ENCODE measurements at regions of chr15 and their contacts with region 1.

Region 1: DNA sequence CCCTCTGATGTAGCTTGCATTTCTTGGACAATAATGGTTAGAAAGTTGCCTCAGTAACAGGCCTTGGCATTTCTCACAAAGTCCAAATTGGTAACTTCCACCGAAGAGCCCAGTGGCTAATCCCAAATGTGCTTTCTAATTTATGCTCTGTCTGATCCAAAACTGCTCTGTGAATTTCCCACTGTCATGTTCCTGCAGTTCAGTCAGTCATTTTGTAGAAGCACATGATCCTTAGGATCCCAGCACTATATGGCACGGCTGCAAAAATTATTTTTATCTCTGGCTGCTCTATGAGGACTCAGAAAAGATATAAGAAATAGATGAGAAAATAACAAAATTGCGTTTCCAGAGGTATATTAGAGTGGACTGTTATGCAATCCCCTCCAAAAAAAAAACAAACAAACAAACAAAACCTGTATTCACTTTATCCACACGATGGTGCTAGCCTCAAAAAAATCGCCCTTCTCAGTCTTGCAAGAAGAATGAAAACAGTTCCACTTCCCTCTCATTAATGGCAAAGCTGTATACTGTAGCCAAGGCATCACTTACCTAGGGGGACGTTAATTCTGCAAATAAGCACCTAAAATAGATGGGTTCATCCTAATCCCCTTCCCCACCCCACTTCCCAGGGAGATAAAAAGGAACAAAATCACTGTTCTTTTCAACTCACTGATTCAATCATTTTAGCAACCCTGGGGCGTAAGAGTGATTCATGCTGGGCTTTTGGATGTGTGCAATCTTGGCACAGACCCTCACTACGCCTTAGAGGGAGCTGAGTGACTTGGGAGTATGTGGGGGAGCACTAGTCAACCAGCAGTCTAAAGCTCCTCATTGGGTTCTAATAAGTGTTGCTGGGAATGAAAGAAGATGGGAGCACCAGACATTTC is 61.3 kb downstream of the TMCO5A start:
- DNase-seq: peak; percentile 27
- H3K4me3 ChIP-seq: no peak overlapping the region; the same call in 1 of the 2 replicates
- H3K27ac ChIP-seq: no peak overlapping the region
- H3K27me3 ChIP-seq: no peaks in the 10 kb centered on the region
- CTCF ChIP-seq: peak; percentile 72

Region 2: DNA sequence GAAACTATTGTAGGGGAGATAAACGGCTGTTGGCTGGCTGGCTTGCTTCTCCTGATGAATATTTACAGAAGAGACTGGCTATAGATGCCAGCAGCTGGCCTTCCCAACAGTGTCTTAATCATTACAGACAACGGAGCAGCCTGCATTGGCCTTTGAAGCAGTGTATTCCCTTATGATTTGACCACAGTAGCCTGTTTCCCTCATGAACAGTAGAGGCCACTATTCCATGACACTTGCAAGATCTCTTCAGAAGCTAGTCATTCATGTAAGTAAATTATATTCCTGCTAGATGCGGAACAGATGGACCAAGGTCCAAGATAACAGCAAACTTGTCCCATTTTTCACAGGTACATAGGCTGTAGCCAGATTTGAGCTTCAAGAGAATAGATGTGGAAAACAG is 13.9 kb before region 1 on chr15:
- CTCF ChIA-PET with region 1: interaction called, 13 read pairs
- POLR2A ChIA-PET with region 1: no interaction called
- DNase-seq: no peak
- H3K4me3 ChIP-seq: no peak overlapping the region
- H3K27ac ChIP-seq: no peak overlapping the region
- H3K27me3 ChIP-seq: peaks cover 2% of the 10 kb centered on the region
- CTCF ChIP-seq: peak; percentile 68

Region 3: DNA sequence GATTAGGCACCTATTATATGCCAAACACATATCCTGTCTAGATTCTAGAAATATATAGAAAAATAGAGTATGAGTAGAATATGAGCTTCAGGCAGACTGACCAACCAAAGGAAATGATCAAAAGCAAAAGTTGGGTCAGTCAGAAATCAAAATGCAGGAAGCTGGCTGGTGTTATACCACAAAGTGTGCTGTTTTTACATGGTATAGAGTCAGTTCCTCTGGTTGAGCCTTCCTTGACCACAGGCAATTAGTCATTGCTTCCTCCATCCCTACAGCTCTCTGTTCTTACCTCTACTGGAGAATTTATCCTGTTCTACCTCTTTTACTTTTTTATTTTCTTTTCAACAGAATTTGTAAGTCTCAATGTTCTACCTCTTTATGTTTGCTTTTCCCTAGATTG is 88.6 kb after region 1 on chr15:
- CTCF ChIA-PET with region 1: no interaction called
- POLR2A ChIA-PET with region 1: no interaction called
- DNase-seq: no peak
- H3K4me3 ChIP-seq: no peak overlapping the region
- H3K27ac ChIP-seq: no peak overlapping the region
- H3K27me3 ChIP-seq: no peaks in the 10 kb centered on the region
- CTCF ChIP-seq: no peak

Region 4: GRCh38 chr15:38111070-38111469 is 115.4 kb after region 1 on chr15:
- CTCF ChIA-PET with region 1: no interaction called
- POLR2A ChIA-PET with region 1: no interaction called
- DNase-seq: no peak
- H3K4me3 ChIP-seq: no peak overlapping the region
- H3K27ac ChIP-seq: no peak overlapping the region
- H3K27me3 ChIP-seq: no peaks in the 10 kb centered on the region
- CTCF ChIP-seq: no peak

Region 5: DNA sequence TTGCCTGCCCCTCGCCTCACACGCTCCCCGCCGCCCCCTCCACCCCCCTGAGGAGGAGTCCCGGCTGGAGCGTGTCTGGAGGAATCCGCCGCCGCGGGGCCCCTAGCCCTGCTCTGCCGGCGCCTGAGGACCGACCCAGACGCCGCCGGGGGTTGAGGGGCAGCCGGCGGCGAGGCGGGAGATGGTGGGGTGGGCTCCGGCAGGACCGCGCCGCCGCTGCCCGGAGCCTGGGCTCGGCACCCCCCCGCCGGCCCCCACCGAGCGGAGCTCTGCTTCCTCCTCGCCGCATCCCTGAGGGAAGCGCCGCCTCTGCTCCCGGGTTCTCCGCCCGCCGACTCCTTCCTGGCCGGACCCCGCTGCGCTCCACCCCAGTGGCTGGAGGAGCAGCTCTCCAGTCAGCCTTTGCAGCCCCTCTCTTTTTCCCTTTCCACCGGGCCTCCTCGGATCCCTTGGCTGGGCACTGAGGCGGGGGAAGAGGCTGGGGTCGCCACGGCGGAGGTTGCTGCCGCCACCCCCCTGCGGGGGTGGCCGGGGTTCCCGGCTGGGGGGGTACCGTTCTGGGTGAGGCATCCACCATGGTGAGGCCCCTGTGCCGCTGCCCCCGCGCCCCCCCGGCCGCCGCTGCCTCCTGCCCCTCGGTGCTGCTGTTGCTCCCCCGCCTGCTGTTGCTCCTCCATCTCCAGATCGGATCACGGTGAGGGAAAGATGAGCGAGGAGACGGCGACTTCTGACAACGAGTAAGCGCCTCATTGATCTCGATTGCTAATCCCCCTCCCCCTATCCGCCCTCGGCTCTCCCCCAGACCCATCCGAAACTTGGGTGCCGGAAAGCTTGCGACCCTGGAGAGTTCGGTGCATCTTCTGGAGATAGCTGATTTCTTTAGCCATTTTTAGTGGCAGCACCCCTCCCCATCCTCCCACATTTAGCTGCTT is 257.0 kb after region 1 on chr15 and contains the start of gene SPRED1:
- CTCF ChIA-PET with region 1: interaction called, 20 read pairs
- POLR2A ChIA-PET with region 1: no interaction called
- DNase-seq: no peak
- H3K4me3 ChIP-seq: peak within 1 kb of the TSS; percentile 93
- H3K27ac ChIP-seq: peak within 1 kb of the TSS; percentile 94
- H3K27me3 ChIP-seq: no peaks in the 10 kb centered on the region
- CTCF ChIP-seq: no peak
- polyA plus RNA-seq, gene SPRED1: 10.7 and 15.1 TPM in 2 replicates

Region 6: DNA sequence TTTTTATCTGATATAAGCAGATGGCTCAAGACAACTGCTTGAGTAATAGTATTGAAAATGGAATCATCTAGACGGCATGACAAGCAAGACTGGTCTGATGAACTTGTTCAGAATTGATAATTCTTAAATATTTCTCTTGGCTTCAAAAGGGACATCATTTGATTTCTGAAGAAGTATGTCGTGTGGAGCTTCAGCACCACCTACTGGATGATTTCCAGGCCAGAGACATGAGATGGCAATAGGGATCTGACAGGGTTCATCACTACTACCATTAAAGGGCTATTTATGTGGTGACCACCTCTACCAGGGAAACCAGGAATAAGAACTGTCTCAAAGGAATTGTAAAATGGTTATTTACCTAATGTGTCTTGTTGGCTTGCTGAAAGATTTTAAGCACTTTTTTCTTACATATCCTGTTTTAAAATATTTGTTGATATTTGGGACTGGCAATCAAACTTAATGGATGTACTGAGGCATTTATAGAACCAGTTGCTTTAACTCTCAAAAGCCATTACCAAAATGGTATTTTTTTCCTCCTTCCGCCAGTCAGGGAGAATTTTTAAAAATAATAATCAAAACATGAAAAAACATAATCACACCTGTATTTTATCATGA is 358.7 kb after region 1 on chr15:
- CTCF ChIA-PET with region 1: interaction called, 29 read pairs
- POLR2A ChIA-PET with region 1: no interaction called
- DNase-seq: peak; percentile 37
- H3K4me3 ChIP-seq: no peak overlapping the region
- H3K27ac ChIP-seq: no peak overlapping the region
- H3K27me3 ChIP-seq: no peaks in the 10 kb centered on the region
- CTCF ChIP-seq: peak; percentile 82

Region 7: DNA sequence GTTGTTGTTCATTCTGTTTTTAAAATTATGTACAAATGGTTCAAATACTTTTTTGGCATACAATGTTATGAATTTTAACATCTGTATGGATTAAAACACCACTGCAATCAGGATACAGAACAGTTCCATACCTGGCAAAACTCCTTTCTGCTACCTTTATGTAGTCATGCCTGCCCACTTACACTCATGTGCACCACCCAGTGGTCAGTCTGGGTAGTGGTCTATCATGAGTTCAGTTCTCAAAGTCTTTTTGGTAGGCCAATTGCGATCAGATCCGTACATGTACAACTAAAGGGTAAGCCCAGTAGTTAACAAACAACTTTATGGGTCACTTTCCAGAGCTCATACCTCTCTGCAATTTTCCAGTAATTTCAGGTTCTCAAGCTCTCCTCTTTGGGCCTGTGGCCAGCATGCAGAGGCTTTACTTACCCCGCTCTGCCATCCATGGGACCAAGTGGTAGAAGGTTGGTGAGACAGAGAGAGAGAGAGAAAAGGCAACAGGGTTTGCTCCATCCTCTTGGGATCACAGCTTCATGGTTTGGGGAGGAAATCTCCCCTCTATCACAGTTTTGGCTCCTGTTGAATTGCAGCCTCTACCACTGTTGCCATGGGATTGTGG is 394.3 kb after region 1 on chr15:
- CTCF ChIA-PET with region 1: interaction called, 34 read pairs
- POLR2A ChIA-PET with region 1: no interaction called
- DNase-seq: no peak
- H3K4me3 ChIP-seq: no peak overlapping the region
- H3K27ac ChIP-seq: no peak overlapping the region
- H3K27me3 ChIP-seq: no peaks in the 10 kb centered on the region
- CTCF ChIP-seq: peak; percentile 89

Region 8: DNA sequence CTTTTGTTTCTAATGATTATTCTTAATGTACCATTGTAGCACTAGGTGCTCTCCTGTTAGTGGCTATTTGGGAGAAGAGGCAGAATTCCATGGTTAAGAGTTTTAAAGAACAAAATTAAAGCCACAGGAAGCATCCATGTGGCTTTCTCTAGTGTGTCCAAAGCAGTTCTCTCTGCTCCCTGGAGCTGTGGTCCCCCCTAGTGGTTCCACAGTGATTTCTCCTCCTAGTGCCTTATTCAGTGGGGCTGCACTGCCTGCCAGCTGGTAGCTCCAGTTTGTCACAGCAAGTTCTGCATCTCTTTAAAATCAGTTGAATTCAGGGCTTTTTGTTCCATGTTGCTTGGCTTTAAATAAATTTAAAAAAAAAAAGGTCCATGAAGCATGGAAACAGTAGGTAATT is 418.7 kb after region 1 on chr15:
- CTCF ChIA-PET with region 1: interaction called, 29 read pairs
- POLR2A ChIA-PET with region 1: no interaction called
- DNase-seq: peak; percentile 46
- H3K4me3 ChIP-seq: no peak overlapping the region
- H3K27ac ChIP-seq: no peak overlapping the region
- H3K27me3 ChIP-seq: peaks cover 20% of the 10 kb centered on the region
- CTCF ChIP-seq: peak; percentile 92

Region 9: GRCh38 chr15:38699633-38700230 is 704.0 kb after region 1 on chr15:
- CTCF ChIA-PET with region 1: interaction called, 29 read pairs
- POLR2A ChIA-PET with region 1: no interaction called
- DNase-seq: no peak
- H3K4me3 ChIP-seq: no peak overlapping the region
- H3K27ac ChIP-seq: no peak overlapping the region
- H3K27me3 ChIP-seq: peaks cover 2% of the 10 kb centered on the region
- CTCF ChIP-seq: peak; percentile 90

Measured in AG04450 (cell line).